Natural killer cell (primary cell): ENCODE measurements at regions of chr2 and their contacts with region 1.

Region 1: GRCh38 chr2:37231241-37232130 is at the starts of genes CEBPZ and NDUFAF7:
- DNase-seq: peak; percentile 77 to 94
- ATAC-seq: peak; percentile 85 to 94 (median 89)
- H3K4me3 ChIP-seq: peak within 1 kb of the TSS; percentile 91
- H3K4me3 Mint-ChIP-seq: no peak within 1 kb of the TSS
- H3K27ac ChIP-seq: peak within 1 kb of the TSS; percentile 97
- H3K27ac Mint-ChIP-seq: no peak within 1 kb of the TSS
- H3K4me1 ChIP-seq: peaks cover 25% of the 10 kb centered on the region
- H3K4me1 Mint-ChIP-seq: peaks cover 11 to 16% of the 10 kb centered on the region in 2 donors
- H3K27me3 ChIP-seq: no peaks in the 10 kb centered on the region
- H3K27me3 Mint-ChIP-seq: no peaks in the 10 kb centered on the region
- CTCF ChIP-seq: no peak
- total RNA-seq, gene CEBPZ: 51.0 to 58.1 (median 54.5) TPM
- total RNA-seq, gene NDUFAF7: 13.4 to 24.1 (median 19.7) TPM

Region 2: GRCh38 chr2:37083873-37084794 is 147.4 kb before region 1 on chr2 and contains the starts of genes GPATCH11 and HEATR5B:
- intact Hi-C with region 1: loop called (anchors 10 kb)
- DNase-seq: peak; percentile 72 to 98
- ATAC-seq: peak; percentile 71 to 80 (median 76)
- H3K4me3 ChIP-seq: peak within 1 kb of the TSS; percentile 85
- H3K4me3 Mint-ChIP-seq: no peak within 1 kb of the TSS
- H3K27ac ChIP-seq: peak within 1 kb of the TSS; percentile 70
- H3K27ac Mint-ChIP-seq: no peak within 1 kb of the TSS
- H3K4me1 ChIP-seq: peaks cover 22% of the 10 kb centered on the region
- H3K4me1 Mint-ChIP-seq: peaks cover 39% of the 10 kb centered on the region in 2 donors
- H3K27me3 ChIP-seq: no peaks in the 10 kb centered on the region
- H3K27me3 Mint-ChIP-seq: no peaks in the 10 kb centered on the region
- CTCF ChIP-seq: no peak
- total RNA-seq, gene GPATCH11: 6.5 to 18.2 (median 8.6) TPM
- total RNA-seq, gene HEATR5B: 31.1 to 53.9 (median 39.9) TPM

Region 3: DNA sequence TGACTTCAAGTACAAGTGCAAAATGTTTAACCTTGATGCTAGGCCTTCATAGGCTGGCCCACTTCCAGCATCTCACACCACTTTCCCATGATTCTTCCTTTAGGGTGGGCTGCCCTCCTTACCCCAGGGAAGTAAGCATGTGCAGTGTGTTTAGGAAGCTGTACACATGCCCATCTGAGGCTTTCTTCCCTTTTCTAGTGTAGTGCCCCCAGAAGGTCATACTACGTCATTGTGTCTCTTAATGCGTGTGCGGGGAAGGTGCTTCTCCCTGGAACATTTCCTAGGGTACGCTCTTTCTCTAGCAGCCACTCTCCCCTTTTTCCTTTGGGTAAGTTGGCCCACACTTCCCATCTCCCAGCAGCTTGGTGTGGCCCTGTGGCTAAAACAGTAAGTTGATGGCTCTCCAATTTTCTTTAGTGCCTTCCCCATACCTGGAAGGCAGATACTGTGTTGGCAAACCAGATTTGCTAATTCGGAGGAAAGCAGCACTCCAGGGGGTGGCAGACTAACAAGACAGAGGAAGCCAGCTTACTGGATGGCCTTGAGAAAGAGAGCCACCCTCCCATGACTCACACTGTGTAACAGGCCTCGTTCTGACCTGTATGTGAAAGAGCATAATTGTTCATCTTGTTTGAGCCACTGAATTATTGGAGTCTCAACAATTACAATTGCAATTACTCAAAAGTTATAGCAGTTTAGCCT is 41.9 kb before region 1 on chr2:
- intact Hi-C with region 1: no loop called
- DNase-seq: no peak
- ATAC-seq: peak in 1 of 3 donors; percentile 48
- H3K4me3 ChIP-seq: no peak overlapping the region
- H3K4me3 Mint-ChIP-seq: no peak overlapping the region
- H3K27ac ChIP-seq: no peak overlapping the region
- H3K27ac Mint-ChIP-seq: no peak overlapping the region
- H3K4me1 ChIP-seq: no peaks in the 10 kb centered on the region
- H3K4me1 Mint-ChIP-seq: no peaks in the 10 kb centered on the region
- H3K27me3 ChIP-seq: no peaks in the 10 kb centered on the region
- H3K27me3 Mint-ChIP-seq: peaks cover 9 to 12% of the 10 kb centered on the region in 2 donors
- CTCF ChIP-seq: no peak

Region 4: GRCh38 chr2:37201766-37202165 is 29.7 kb before region 1 on chr2:
- intact Hi-C with region 1: loop called (anchors 1 kb)
- DNase-seq: peak; percentile 27 to 51
- ATAC-seq: peak; percentile 88 to 94 (median 89)
- H3K4me3 ChIP-seq: no peak overlapping the region
- H3K4me3 Mint-ChIP-seq: peak overlapping the region; percentile 45
- H3K27ac ChIP-seq: peak overlapping the region; percentile 14
- H3K27ac Mint-ChIP-seq: peak overlapping the region; percentile 56 to 85
- H3K4me1 ChIP-seq: peaks cover 11% of the 10 kb centered on the region
- H3K4me1 Mint-ChIP-seq: peaks cover 30 to 32% of the 10 kb centered on the region in 2 donors
- H3K27me3 ChIP-seq: no peaks in the 10 kb centered on the region
- H3K27me3 Mint-ChIP-seq: no peaks in the 10 kb centered on the region
- CTCF ChIP-seq: no peak

Region 5: GRCh38 chr2:37324786-37325624 is 93.5 kb after region 1 on chr2 and contains the start of gene PRKD3:
- intact Hi-C with region 1: loop called (anchors 2 kb)
- DNase-seq: peak; percentile 69 to 75
- ATAC-seq: peak; percentile 63 to 83 (median 76)
- H3K4me3 ChIP-seq: peak within 1 kb of the TSS; percentile 82
- H3K4me3 Mint-ChIP-seq: peak within 1 kb of the TSS; percentile 97
- H3K27ac ChIP-seq: peak within 1 kb of the TSS; percentile 86
- H3K27ac Mint-ChIP-seq: peak within 1 kb of the TSS; percentile 96
- H3K4me1 ChIP-seq: peaks cover 20% of the 10 kb centered on the region
- H3K4me1 Mint-ChIP-seq: peaks cover 28 to 32% of the 10 kb centered on the region in 2 donors
- H3K27me3 ChIP-seq: peaks cover 3% of the 10 kb centered on the region
- H3K27me3 Mint-ChIP-seq: peaks cover 10 to 19% of the 10 kb centered on the region in 2 donors
- CTCF ChIP-seq: no peak
- total RNA-seq, gene PRKD3: 64.4 to 76.2 (median 65.1) TPM

Region 6: GRCh38 chr2:37489041-37489456 is 257.6 kb after region 1 on chr2:
- intact Hi-C with region 1: no loop called
- DNase-seq: no peak
- ATAC-seq: no peak
- H3K4me3 ChIP-seq: no peak overlapping the region
- H3K4me3 Mint-ChIP-seq: no peak overlapping the region
- H3K27ac ChIP-seq: no peak overlapping the region
- H3K27ac Mint-ChIP-seq: no peak overlapping the region
- H3K4me1 ChIP-seq: no peaks in the 10 kb centered on the region
- H3K4me1 Mint-ChIP-seq: no peaks in the 10 kb centered on the region
- H3K27me3 ChIP-seq: no peaks in the 10 kb centered on the region
- H3K27me3 Mint-ChIP-seq: no peaks in the 10 kb centered on the region
- CTCF ChIP-seq: no peak